ENCODE measurements at regions of chr7 and their contacts with region 1.

Region 1: GRCh38 chr7:142459551-142459963 is 201.7 kb upstream of the PRSS58 start:
- DNase-seq: no peak
- H3K4me3 ChIP-seq: no peak overlapping the region
- CTCF ChIP-seq: peak; percentile 69

Region 2: DNA sequence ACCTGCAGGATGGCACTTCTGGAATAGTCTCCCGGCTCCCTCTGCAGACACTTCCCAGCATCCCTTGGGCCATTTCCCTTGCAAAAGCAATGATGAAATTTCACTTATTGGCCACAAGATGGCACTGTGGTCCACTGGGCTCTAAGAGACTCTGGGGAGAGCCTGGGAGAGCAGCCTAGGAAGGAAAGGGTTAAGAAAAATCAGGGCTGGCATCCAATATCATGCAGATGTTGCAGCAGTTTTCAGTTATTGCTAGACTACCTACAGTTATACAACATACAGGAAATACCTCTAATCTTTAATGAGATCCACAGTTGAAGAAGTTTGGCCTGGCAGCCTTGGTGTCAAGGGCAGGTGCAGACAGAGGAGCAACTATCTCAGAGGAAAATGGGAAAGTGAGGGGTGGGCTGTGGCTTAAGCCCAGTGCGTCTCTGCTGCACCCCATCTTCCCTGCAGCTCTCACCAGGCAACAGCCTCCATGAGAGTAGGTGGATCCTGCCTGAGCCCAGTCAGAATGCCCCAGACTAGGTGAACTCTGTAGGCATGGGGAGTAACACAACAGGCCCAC is 101.5 kb before region 1 on chr7:
- CTCF ChIA-PET with region 1: interaction called, 10 read pairs
- POLR2A ChIA-PET with region 1: no interaction called
- DNase-seq: peak; percentile 36
- H3K4me3 ChIP-seq: no peak overlapping the region
- CTCF ChIP-seq: peak; percentile 80

Region 3: DNA sequence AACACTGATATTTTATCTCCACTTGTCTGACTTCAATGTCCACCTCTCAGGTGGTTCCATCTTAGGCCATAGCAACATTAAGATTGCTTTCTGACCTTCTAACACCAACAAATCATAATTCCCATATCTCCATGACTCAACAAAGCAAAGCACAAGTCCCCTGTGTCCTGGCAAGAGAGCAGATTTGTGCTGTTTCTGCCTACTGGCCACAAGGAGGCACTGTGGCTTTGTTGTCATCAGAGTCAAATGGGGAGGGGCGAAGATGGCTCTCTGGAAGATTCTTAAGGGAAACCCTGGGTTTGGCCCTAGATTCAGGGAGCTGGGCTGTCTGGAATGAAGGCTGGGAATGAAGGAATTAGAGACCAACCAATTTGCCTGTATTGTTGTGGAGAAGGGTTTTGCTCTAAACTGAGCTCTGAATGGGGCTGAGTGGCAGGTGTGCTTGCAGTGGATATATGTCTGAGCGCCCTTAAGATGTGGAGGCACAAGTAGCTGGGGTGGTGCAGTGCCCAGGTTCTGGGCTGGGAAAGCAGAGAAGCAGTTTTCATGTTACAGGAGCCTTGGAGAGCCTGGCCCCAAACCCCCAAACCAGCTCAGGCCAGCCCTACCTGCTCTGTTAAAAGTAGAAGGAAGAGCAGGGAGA is 46.9 kb before region 1 on chr7:
- CTCF ChIA-PET with region 1: interaction called, 30 read pairs
- POLR2A ChIA-PET with region 1: no interaction called
- DNase-seq: peak; percentile 16
- H3K4me3 ChIP-seq: no peak overlapping the region
- CTCF ChIP-seq: peak; percentile 84

Region 4: GRCh38 chr7:142420559-142421362 is 38.8 kb before region 1 on chr7:
- CTCF ChIA-PET with region 1: interaction called, 30 read pairs
- POLR2A ChIA-PET with region 1: no interaction called
- DNase-seq: no peak
- H3K4me3 ChIP-seq: no peak overlapping the region
- CTCF ChIP-seq: peak; percentile 75

Region 5: GRCh38 chr7:142438235-142438922 is 21.2 kb before region 1 on chr7:
- CTCF ChIA-PET with region 1: interaction called, 197 read pairs
- POLR2A ChIA-PET with region 1: interaction called, 3 read pairs
- DNase-seq: no peak
- H3K4me3 ChIP-seq: no peak overlapping the region
- CTCF ChIP-seq: peak; percentile 62

Region 6: GRCh38 chr7:142516038-142516501 is 56.5 kb after region 1 on chr7:
- CTCF ChIA-PET with region 1: interaction called, 2,267 read pairs
- POLR2A ChIA-PET with region 1: no interaction called
- DNase-seq: peak; percentile 29
- H3K4me3 ChIP-seq: no peak overlapping the region
- CTCF ChIP-seq: peak; percentile 68

Region 7: GRCh38 chr7:143049362-143049761 is 589.8 kb after region 1 on chr7:
- CTCF ChIA-PET with region 1: no interaction called
- POLR2A ChIA-PET with region 1: no interaction called
- DNase-seq: no peak
- H3K4me3 ChIP-seq: no peak overlapping the region
- CTCF ChIP-seq: no peak